Activated B cell treated with CpG ODN at 0.5 μM for 24 hours (primary cell): ENCODE measurements at regions of chr17 and their contacts with region 1.

Region 1: GRCh38 chr17:69117855-69118784 is 23.6 kb downstream of the ABCA6 start:
- DNase-seq: no peak
- ATAC-seq: peak; percentile 41
- H3K4me3 Mint-ChIP-seq: peak overlapping the region; percentile 42
- H3K27ac Mint-ChIP-seq: peak overlapping the region; percentile 79
- H3K4me1 Mint-ChIP-seq: peaks cover 49% of the 10 kb centered on the region
- H3K27me3 Mint-ChIP-seq: no peaks in the 10 kb centered on the region
- CTCF ChIP-seq: no peak

Region 2: GRCh38 chr17:68101075-68101992 is 1016.8 kb before region 1 on chr17:
- CTCF ChIA-PET with region 1: no interaction called
- POLR2A ChIA-PET with region 1: no interaction called
- intact Hi-C with region 1: loop called (anchors 5 kb)
- DNase-seq: peak; percentile 75
- ATAC-seq: peak; percentile 86
- H3K4me3 Mint-ChIP-seq: peak overlapping the region; percentile 93
- H3K27ac Mint-ChIP-seq: peak overlapping the region; percentile 85
- H3K4me1 Mint-ChIP-seq: peaks cover 31% of the 10 kb centered on the region
- H3K27me3 Mint-ChIP-seq: no peaks in the 10 kb centered on the region
- CTCF ChIP-seq: no peak

Region 3: GRCh38 chr17:68777243-68777855 is 340.8 kb before region 1 on chr17:
- CTCF ChIA-PET with region 1: interaction called, 4 read pairs
- POLR2A ChIA-PET with region 1: no interaction called
- intact Hi-C with region 1: loop called (anchors 2 kb)
- DNase-seq: no peak
- ATAC-seq: no peak
- H3K4me3 Mint-ChIP-seq: no peak overlapping the region
- H3K27ac Mint-ChIP-seq: no peak overlapping the region
- H3K4me1 Mint-ChIP-seq: peaks cover 18% of the 10 kb centered on the region
- H3K27me3 Mint-ChIP-seq: no peaks in the 10 kb centered on the region
- CTCF ChIP-seq: peak; percentile 35

Region 4: GRCh38 chr17:69093279-69093789 is 24.8 kb before region 1 on chr17:
- CTCF ChIA-PET with region 1: no interaction called
- POLR2A ChIA-PET with region 1: no interaction called
- intact Hi-C with region 1: loop called (anchors 2 kb)
- DNase-seq: no peak
- ATAC-seq: no peak
- H3K4me3 Mint-ChIP-seq: peak overlapping the region; percentile 69
- H3K27ac Mint-ChIP-seq: peak overlapping the region; percentile 21
- H3K4me1 Mint-ChIP-seq: peaks cover 18% of the 10 kb centered on the region
- H3K27me3 Mint-ChIP-seq: no peaks in the 10 kb centered on the region
- CTCF ChIP-seq: no peak

Region 5: GRCh38 chr17:69103557-69104233 is 14.4 kb before region 1 on chr17:
- CTCF ChIA-PET with region 1: no interaction called
- POLR2A ChIA-PET with region 1: no interaction called
- intact Hi-C with region 1: no loop called
- DNase-seq: no peak
- ATAC-seq: no peak
- H3K4me3 Mint-ChIP-seq: no peak overlapping the region
- H3K27ac Mint-ChIP-seq: no peak overlapping the region
- H3K4me1 Mint-ChIP-seq: no peaks in the 10 kb centered on the region
- H3K27me3 Mint-ChIP-seq: no peaks in the 10 kb centered on the region
- CTCF ChIP-seq: no peak

Region 6: GRCh38 chr17:69179227-69179952 is 61.3 kb after region 1 on chr17:
- CTCF ChIA-PET with region 1: no interaction called
- POLR2A ChIA-PET with region 1: no interaction called
- intact Hi-C with region 1: loop called (anchors 1 kb)
- DNase-seq: no peak
- ATAC-seq: peak; percentile 68
- H3K4me3 Mint-ChIP-seq: no peak overlapping the region
- H3K27ac Mint-ChIP-seq: peak overlapping the region; percentile 24
- H3K4me1 Mint-ChIP-seq: peaks cover 35% of the 10 kb centered on the region
- H3K27me3 Mint-ChIP-seq: no peaks in the 10 kb centered on the region
- CTCF ChIP-seq: no peak

Region 7: GRCh38 chr17:69506489-69506888 is 388.4 kb after region 1 on chr17:
- CTCF ChIA-PET with region 1: no interaction called
- POLR2A ChIA-PET with region 1: no interaction called
- intact Hi-C with region 1: loop called (anchors 1 kb)
- DNase-seq: no peak
- ATAC-seq: no peak
- H3K4me3 Mint-ChIP-seq: no peak overlapping the region
- H3K27ac Mint-ChIP-seq: no peak overlapping the region
- H3K4me1 Mint-ChIP-seq: peaks cover 44% of the 10 kb centered on the region
- H3K27me3 Mint-ChIP-seq: no peaks in the 10 kb centered on the region
- CTCF ChIP-seq: no peak